ENCODE measurements at regions of chr17 and their contacts with region 1.

Region 1: DNA sequence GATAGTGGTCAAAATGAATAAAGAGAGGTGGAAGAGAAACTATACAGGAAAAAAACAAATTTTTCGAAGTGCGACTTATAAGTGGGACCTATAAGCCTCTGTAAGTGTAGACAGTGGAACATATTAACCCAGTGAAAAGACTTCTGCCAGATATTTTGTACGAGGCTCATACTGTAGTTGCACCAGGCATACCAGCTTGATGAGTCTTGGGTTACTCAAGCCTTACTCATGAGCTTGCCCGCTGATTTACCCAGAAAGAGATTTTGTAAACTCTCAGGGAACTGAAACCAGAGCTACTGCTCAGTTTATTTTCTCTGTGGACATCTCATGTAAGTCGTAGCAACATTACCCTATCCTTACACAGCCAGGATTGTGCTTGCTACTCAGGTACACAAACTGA is 708.0 kb upstream of the SOX9 start:
- DNase-seq: peak; percentile 95
- H3K4me3 Mint-ChIP-seq: peak overlapping the region; percentile 65
- H3K27ac Mint-ChIP-seq: peak overlapping the region; percentile 97
- H3K4me1 Mint-ChIP-seq: peaks cover 38% of the 10 kb centered on the region
- H3K27me3 Mint-ChIP-seq: no peaks in the 10 kb centered on the region
- CTCF ChIP-seq: no peak

Region 2: GRCh38 chr17:71180801-71181385 is 231.9 kb before region 1 on chr17:
- CTCF ChIA-PET with region 1: no interaction called
- POLR2A ChIA-PET with region 1: no interaction called
- intact Hi-C with region 1: loop called (anchors 10 kb)
- DNase-seq: peak; percentile 14
- H3K4me3 Mint-ChIP-seq: no peak overlapping the region
- H3K27ac Mint-ChIP-seq: no peak overlapping the region
- H3K4me1 Mint-ChIP-seq: peaks cover 5% of the 10 kb centered on the region
- H3K27me3 Mint-ChIP-seq: no peaks in the 10 kb centered on the region
- CTCF ChIP-seq: no peak

Region 3: GRCh38 chr17:71402661-71403141 is 10.1 kb before region 1 on chr17:
- CTCF ChIA-PET with region 1: interaction called, 3 read pairs
- POLR2A ChIA-PET with region 1: interaction called, 16 read pairs
- intact Hi-C with region 1: no loop called
- DNase-seq: peak; percentile 81
- H3K4me3 Mint-ChIP-seq: no peak overlapping the region
- H3K27ac Mint-ChIP-seq: peak overlapping the region; percentile 88
- H3K4me1 Mint-ChIP-seq: peaks cover 30% of the 10 kb centered on the region
- H3K27me3 Mint-ChIP-seq: no peaks in the 10 kb centered on the region
- CTCF ChIP-seq: no peak

Region 4: GRCh38 chr17:71423871-71424546 is 11.2 kb after region 1 on chr17:
- CTCF ChIA-PET with region 1: no interaction called
- POLR2A ChIA-PET with region 1: interaction called, 19 read pairs
- intact Hi-C with region 1: no loop called
- DNase-seq: peak; percentile 86
- H3K4me3 Mint-ChIP-seq: no peak overlapping the region
- H3K27ac Mint-ChIP-seq: peak overlapping the region; percentile 57
- H3K4me1 Mint-ChIP-seq: peaks cover 15% of the 10 kb centered on the region
- H3K27me3 Mint-ChIP-seq: no peaks in the 10 kb centered on the region
- CTCF ChIP-seq: no peak